ENCODE measurements at regions of chr20 and their contacts with region 1.

Region 1: DNA sequence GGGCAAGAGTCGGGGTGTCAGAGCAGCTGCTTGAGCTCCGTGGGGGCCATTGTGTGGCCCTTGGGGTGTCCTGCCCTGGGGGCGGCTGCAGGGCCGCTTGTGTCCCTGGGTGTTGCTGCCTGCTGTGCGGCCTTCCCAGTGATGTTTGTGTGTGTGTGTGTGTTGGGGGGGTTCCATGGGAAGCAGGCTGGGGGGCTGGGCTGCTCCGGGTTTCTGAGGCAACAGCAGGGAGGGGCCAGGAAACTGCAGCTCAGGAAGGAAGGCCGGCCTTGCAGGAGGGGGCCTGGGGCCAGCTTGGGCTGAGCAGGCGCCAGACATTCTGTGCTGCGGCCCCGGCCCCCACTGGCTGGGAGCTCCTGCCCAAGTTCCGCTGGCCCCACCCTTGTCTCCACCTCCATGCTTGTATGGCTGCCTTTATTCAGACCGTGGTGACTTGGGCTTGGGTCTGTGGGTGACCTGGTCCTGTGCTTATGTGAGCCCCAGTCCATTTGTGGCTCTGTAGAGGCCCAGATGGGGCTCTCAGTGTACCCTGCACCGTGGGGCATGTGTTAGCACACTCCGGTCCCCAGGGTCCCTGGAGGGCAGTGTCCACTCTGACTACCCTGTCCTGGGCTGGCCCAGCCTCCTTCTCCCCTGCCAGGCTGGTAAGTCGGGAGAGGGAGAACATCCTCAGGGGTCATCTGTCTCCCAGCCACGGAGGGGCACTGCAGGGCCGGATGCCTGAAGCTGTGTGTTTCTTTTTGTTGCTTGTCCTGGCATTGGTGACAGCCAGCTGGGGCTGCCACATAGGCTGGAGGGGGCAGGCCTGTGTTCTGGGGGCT is 4.6 kb upstream of the SOX18 start:
- DNase-seq: peak; percentile 60 to 68 (median 62)
- ATAC-seq: peak; percentile 59
- H3K4me3 ChIP-seq: no peak overlapping the region
- H3K27ac ChIP-seq: peak overlapping the region; percentile 61
- H3K4me1 ChIP-seq: peaks cover 29 to 87% of the 10 kb centered on the region in 2 experiments
- H3K27me3 ChIP-seq: no peaks in the 10 kb centered on the region
- CTCF ChIP-seq: peak; percentile 34 to 53 (median 45); a peak in 4 of 6 replicates
- EP300 ChIP-seq: no peak
- POLR2A ChIP-seq: no peak
- RAD21 ChIP-seq: peak in 1 of 2 experiments; percentile 13; a peak in 1 of 4 replicates

Region 2: DNA sequence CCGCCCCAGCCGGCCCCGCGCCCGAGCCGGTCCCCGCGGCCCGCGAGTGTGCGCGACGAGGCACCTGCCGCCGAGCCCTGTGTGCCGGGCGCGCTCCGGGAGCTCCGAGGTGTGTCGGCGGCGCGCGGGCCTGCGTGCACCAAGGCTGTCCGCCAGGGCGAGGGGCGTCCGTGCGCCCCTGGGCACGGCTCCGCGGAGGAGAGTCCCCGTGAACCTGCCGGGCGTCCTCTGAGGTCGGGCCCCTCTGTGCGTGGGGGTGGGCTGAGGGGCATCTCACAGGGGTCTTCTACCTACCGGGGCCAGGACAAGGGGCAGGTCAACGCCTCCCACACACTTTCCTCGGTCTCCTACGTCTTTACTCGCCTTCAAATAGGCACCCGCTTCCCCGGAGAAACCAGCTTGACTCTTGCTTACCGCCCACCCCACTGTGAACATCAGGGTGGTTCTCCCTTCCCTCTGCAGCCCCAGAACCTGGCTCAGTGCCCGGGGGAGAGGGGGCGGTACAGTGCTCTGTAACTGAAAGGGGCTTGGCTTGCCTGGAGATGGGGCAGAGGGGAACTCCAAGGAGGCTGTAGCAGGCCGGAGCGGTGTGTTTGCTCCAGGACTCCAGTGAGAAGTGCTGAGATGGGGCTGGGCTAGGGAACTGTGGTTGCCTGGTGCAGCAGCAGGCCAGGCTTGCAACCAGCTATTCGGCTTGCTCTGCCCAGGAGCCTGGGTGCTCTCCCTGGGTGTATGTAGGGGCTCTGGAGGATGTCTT is 74.3 kb before region 1 on chr20 and contains the start of gene SAMD10:
- CTCF ChIA-PET with region 1: no interaction called
- POLR2A ChIA-PET with region 1: no interaction called
- in situ Hi-C with region 1: no loop called
- intact Hi-C with region 1: loop called (anchors 5 kb)
- DNase-seq: peak; percentile 63 to 77 (median 67)
- ATAC-seq: peak; percentile 20
- H3K4me3 ChIP-seq: peak within 1 kb of the TSS; percentile 100
- H3K27ac ChIP-seq: peak within 1 kb of the TSS; percentile 83
- H3K4me1 ChIP-seq: peaks cover 24 to 56% of the 10 kb centered on the region in 2 experiments
- H3K27me3 ChIP-seq: no peaks in the 10 kb centered on the region
- CTCF ChIP-seq: 0 out of 6 replicates have a peak, but pooled peaks of 1 of the 3 experiments have one; percentile 11
- EP300 ChIP-seq: no peak
- POLR2A ChIP-seq: peak; percentile 57
- RAD21 ChIP-seq: no peak
- polyA plus RNA-seq, gene SAMD10: 0.37 to 0.52 TPM

Region 3: GRCh38 chr20:64038565-64039292 is 15.3 kb before region 1 on chr20:
- CTCF ChIA-PET with region 1: interaction called, 9 read pairs
- POLR2A ChIA-PET with region 1: interaction called, 14 read pairs
- in situ Hi-C with region 1: no loop called
- intact Hi-C with region 1: loop called (anchors 2 kb)
- DNase-seq: peak; percentile 84 to 89 (median 86)
- ATAC-seq: peak; percentile 86
- H3K4me3 ChIP-seq: peak overlapping the region; percentile 51
- H3K27ac ChIP-seq: peak overlapping the region; percentile 83
- H3K4me1 ChIP-seq: peaks cover 33 to 85% of the 10 kb centered on the region in 2 experiments
- H3K27me3 ChIP-seq: no peaks in the 10 kb centered on the region
- CTCF ChIP-seq: peak; percentile 63 to 97 (median 86)
- EP300 ChIP-seq: no peak
- POLR2A ChIP-seq: peak; percentile 37; the same call in 1 of the 2 replicates
- RAD21 ChIP-seq: peak; percentile 60 to 73

Region 4: DNA sequence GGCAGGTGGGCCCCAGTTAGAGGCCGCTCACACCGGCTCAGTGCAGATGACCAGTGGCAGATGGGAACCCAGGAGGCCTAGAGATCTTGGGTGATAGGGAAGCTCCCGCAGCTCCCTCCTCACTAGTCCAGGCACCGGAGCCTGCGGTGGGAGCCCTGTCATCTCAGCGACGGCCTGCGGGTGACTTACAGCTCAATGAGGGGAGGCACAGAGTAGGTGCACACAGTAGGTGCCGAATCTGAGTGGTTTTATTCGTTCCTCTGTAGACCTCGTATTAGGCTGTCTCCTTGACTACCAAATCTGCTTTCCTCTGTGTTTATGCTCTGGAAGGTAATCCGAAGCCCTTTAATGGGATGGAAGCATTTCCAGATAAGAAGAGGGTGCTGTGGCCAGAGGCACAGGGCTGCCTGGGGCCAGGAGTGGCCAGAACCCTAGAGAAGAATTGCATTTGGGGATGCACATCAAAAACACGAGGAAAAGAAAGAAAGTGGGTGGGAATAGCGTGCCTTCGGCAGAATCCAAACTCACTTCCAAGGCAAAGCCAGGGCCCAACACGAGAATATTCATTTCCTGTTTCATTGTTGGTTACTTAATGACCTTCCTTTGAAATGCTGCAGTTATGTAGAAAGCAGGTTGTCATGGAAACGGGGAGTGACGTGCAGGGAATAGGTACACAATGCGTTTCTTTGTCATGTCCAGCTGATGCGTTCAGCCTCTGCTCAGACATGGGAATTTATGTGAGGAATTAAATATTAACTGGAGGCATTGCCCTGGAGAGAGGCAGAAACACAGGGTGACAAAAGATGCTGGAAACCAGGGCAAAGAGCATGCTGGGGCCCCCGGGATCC is 134.9 kb after region 1 on chr20:
- CTCF ChIA-PET with region 1: no interaction called
- POLR2A ChIA-PET with region 1: no interaction called
- in situ Hi-C with region 1: no loop called
- intact Hi-C with region 1: no loop called
- DNase-seq: no peak
- ATAC-seq: no peak
- H3K4me3 ChIP-seq: no peak overlapping the region
- H3K27ac ChIP-seq: no peak overlapping the region
- H3K4me1 ChIP-seq: peaks cover 0 to 3% of the 10 kb centered on the region in 2 experiments; a peak in 2 of 5 replicates
- H3K27me3 ChIP-seq: peaks cover 55 to 86% of the 10 kb centered on the region in 2 experiments
- CTCF ChIP-seq: no peak
- EP300 ChIP-seq: no peak
- POLR2A ChIP-seq: no peak
- RAD21 ChIP-seq: no peak

Measured in K562 (cell line).